IMR-90 (cell line): ENCODE measurements at regions of chr9 and their contacts with region 1.

Region 1: GRCh38 chr9:21812946-21813568 is 10.6 kb downstream of the MTAP start:
- DNase-seq: peak; percentile 74
- ATAC-seq: peak; percentile 87
- H3K4me3 ChIP-seq: no peak overlapping the region
- H3K27ac ChIP-seq: no peak overlapping the region
- H3K4me1 ChIP-seq: 0 out of 2 replicates have a peak, but pooled peaks cover 4% of the 10 kb centered on the region
- H3K27me3 ChIP-seq: no peaks in the 10 kb centered on the region
- CTCF ChIP-seq: peak; percentile 92
- POLR2A ChIP-seq: 0 out of 2 replicates have a peak, but pooled peaks have one; percentile 20
- RAD21 ChIP-seq: peak; percentile 96

Region 2: DNA sequence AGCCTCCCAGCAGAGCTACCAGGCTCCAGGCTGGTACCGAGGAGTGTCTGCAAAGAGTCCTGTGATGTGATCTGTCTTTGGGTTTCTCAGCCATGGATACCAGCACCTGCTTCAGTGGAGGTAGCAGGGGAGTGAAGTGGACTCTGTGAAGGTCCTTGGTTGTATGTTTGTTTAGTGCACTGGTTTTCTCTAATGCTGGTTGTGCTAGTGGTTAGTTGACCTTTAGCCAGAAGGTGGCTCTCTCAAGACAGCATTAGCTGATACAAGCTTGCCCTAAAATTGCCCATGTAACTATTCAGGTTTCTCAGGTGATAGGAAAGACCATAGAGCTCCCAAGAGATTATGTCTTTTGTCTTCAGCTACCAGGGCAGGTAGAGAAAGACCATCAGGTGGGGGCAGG is 76.6 kb after region 1 on chr9:
- CTCF ChIA-PET with region 1: no interaction called
- POLR2A ChIA-PET with region 1: no interaction called
- dilution Hi-C with region 1: no loop called
- in situ Hi-C with region 1: no loop called
- intact Hi-C with region 1: no loop called
- DNase-seq: no peak
- ATAC-seq: no peak
- H3K4me3 ChIP-seq: no peak overlapping the region
- H3K27ac ChIP-seq: no peak overlapping the region
- H3K4me1 ChIP-seq: no peaks in the 10 kb centered on the region
- H3K27me3 ChIP-seq: no peaks in the 10 kb centered on the region
- CTCF ChIP-seq: no peak
- POLR2A ChIP-seq: no peak
- RAD21 ChIP-seq: no peak

Region 3: GRCh38 chr9:21965401-21965951 is 152.4 kb after region 1 on chr9:
- CTCF ChIA-PET with region 1: interaction called, 4 read pairs
- POLR2A ChIA-PET with region 1: no interaction called
- dilution Hi-C with region 1: no loop called
- in situ Hi-C with region 1: loop called (anchors 10 kb)
- intact Hi-C with region 1: loop called (anchors 1 kb)
- DNase-seq: peak; percentile 77
- ATAC-seq: peak; percentile 93
- H3K4me3 ChIP-seq: peak overlapping the region; percentile 21
- H3K27ac ChIP-seq: no peak overlapping the region
- H3K4me1 ChIP-seq: peaks cover 4% of the 10 kb centered on the region
- H3K27me3 ChIP-seq: peaks cover 36% of the 10 kb centered on the region
- CTCF ChIP-seq: peak; percentile 59
- POLR2A ChIP-seq: no peak
- RAD21 ChIP-seq: peak; percentile 59

Region 4: DNA sequence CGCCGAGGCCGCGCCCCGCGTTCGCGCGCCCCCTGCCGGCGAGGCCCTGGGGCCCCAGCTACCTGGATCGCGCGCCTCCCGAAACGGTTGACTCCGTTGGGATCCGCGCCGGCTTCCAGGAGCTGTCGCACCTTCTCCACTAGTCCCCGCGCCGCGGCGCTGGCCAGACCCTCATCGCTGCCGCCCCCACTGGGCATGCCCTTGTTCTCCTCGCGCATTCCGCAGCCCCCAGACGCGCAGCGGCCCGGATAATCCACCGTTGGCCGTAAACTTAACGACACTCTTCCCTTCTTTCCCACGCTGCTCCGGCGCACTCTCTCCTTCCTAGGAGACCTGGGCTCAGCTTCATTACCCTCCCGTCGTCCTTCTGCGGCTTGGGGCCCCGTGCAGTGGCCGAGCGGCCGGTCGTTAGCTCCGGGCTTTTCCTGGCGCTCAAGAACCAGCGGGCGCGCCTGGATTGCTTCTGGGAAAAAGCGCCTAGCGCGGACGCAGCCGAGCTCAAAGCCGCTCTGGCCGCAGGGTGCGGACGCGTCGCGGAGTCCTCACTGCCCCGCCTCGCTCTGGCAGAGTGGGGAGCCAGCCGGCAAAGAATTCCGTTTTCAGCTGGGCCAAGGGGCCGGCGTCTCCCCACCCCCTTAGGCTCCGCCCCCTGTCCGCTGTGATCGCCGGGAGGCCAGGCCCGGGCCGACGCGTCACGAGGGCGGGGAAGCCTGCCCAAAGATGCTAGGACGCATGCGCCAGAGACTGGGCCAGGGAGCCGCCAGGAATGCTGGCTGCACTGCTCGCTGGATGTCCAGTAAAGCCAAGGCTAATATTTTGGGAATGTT is 195.9 kb after region 1 on chr9 and contains the start of gene CDKN2B:
- CTCF ChIA-PET with region 1: interaction called, 16 read pairs
- POLR2A ChIA-PET with region 1: no interaction called
- dilution Hi-C with region 1: no loop called
- in situ Hi-C with region 1: loop called (anchors 5 kb)
- intact Hi-C with region 1: loop called (anchors 1 kb)
- DNase-seq: peak; percentile 94
- ATAC-seq: peak; percentile 98
- H3K4me3 ChIP-seq: peak within 1 kb of the TSS; percentile 65
- H3K27ac ChIP-seq: peak within 1 kb of the TSS; percentile 70
- H3K4me1 ChIP-seq: peaks cover 8% of the 10 kb centered on the region; the same call in 1 of the 2 replicates
- H3K27me3 ChIP-seq: no peaks in the 10 kb centered on the region
- CTCF ChIP-seq: peak; percentile 85
- POLR2A ChIP-seq: peak; percentile 97
- RAD21 ChIP-seq: peak; percentile 67
- total RNA-seq, gene CDKN2B: 3.6 and 5.6 TPM in 2 replicates

Region 5: DNA sequence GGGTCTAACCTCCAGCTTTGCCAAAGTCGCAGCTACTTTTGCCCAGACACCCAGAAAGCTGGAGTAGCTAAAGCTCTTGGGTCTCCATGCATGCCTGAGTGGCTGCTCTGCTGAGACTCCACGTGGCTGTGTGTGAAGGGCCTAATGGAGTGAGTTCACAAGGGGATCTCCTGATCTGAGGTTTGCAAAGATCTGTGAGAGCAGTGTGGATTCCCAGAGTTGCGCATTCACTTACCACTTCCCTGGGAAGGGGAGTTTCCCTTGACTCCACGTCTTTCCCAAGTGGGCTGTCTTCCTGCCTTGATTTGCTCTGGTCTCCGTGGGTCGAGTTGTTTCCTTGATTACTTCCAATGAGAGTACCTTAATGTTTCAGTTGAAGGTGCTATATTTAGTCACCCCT is 213.6 kb after region 1 on chr9:
- CTCF ChIA-PET with region 1: no interaction called
- POLR2A ChIA-PET with region 1: no interaction called
- dilution Hi-C with region 1: no loop called
- in situ Hi-C with region 1: no loop called
- intact Hi-C with region 1: no loop called
- DNase-seq: no peak
- ATAC-seq: no peak
- H3K4me3 ChIP-seq: no peak overlapping the region
- H3K27ac ChIP-seq: no peak overlapping the region
- H3K4me1 ChIP-seq: peaks cover 3% of the 10 kb centered on the region; the same call in 1 of the 2 replicates
- H3K27me3 ChIP-seq: no peaks in the 10 kb centered on the region
- CTCF ChIP-seq: no peak
- POLR2A ChIP-seq: no peak
- RAD21 ChIP-seq: no peak

Region 6: DNA sequence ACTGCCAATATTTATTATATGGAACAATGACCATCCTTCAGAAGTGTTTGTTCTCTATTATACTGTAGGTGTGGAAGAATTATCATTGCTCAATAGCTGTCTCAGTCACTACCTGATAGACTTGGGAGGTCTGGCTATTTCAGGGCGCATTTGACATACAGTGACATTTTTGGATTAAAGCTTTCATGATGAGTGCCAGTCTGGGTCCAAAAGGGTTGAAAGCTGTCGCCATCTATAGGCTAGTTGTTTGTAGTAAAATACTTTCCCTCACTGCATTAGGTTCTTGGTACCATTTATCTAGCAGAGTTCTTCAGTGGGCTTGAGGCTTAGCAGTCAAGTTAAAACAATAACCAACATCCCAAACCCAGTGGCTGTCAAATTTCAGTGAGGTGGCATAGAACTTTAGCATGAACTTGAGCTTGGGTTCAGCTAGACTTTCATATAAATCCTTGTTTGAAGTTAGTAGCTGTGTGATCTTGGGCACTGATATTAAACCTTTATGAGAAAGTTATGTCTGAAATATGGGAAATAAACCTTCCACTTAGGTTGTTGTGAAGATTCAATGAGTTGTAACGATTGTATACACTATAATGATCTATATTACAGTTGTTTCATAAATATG is 306.6 kb after region 1 on chr9:
- CTCF ChIA-PET with region 1: interaction called, 3 read pairs
- POLR2A ChIA-PET with region 1: no interaction called
- dilution Hi-C with region 1: no loop called
- in situ Hi-C with region 1: loop called (anchors 25 kb)
- intact Hi-C with region 1: loop called (anchors 2 kb)
- DNase-seq: peak; percentile 50
- ATAC-seq: peak; percentile 30; the same call in 1 of the 2 replicates
- H3K4me3 ChIP-seq: no peak overlapping the region
- H3K27ac ChIP-seq: no peak overlapping the region
- H3K4me1 ChIP-seq: peaks cover 16% of the 10 kb centered on the region
- H3K27me3 ChIP-seq: no peaks in the 10 kb centered on the region
- CTCF ChIP-seq: peak; percentile 64
- POLR2A ChIP-seq: no peak
- RAD21 ChIP-seq: peak; percentile 75

Region 7: DNA sequence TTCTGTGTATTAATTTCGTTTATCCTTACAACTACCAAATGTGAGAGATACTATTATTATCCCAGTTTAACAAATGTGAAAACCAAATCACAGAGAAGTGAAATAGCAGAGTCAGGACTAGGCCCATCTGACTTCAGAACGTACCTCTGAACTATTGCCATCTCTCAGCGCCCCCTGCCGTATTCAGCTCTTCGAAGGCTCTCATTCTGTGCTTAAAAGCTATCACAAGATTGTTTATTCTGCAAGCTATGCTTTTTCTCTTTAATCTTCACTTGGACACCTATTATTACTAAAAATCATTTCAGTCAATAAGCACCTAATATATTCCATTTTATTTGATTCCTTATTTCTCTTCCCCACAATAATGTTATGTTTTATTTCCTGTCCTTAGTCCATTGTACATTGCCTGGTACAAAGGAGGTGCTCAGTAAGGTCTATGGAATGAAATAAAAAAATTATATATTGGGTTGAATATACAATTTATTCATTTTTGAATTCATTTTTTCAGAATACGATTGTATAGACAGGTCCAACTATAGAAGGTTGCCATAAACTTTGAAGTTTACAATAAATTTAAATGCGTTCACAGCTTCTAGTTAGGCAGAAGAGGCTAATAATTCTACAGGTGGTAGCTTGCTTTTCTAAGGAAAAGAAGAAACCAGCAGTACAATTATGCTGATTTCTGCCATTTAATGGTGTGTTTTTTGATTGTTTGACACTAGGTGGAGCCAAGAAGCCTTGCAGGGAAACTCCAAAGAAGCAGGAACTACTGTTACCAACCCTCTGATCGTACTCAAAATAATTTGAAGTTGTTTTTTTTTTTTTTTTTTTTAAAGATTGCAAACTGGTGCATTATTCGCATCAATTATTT is 431.3 kb after region 1 on chr9:
- CTCF ChIA-PET with region 1: interaction called, 9 read pairs
- POLR2A ChIA-PET with region 1: interaction called, 9 read pairs
- dilution Hi-C with region 1: no loop called
- in situ Hi-C with region 1: loop called (anchors 5 kb)
- intact Hi-C with region 1: loop called (anchors 1 kb)
- DNase-seq: peak; percentile 63
- ATAC-seq: peak; percentile 92
- H3K4me3 ChIP-seq: no peak overlapping the region
- H3K27ac ChIP-seq: no peak overlapping the region
- H3K4me1 ChIP-seq: no peaks in the 10 kb centered on the region
- H3K27me3 ChIP-seq: peaks cover 3% of the 10 kb centered on the region
- CTCF ChIP-seq: peak; percentile 67
- POLR2A ChIP-seq: no peak
- RAD21 ChIP-seq: peak; percentile 67

Region 8: DNA sequence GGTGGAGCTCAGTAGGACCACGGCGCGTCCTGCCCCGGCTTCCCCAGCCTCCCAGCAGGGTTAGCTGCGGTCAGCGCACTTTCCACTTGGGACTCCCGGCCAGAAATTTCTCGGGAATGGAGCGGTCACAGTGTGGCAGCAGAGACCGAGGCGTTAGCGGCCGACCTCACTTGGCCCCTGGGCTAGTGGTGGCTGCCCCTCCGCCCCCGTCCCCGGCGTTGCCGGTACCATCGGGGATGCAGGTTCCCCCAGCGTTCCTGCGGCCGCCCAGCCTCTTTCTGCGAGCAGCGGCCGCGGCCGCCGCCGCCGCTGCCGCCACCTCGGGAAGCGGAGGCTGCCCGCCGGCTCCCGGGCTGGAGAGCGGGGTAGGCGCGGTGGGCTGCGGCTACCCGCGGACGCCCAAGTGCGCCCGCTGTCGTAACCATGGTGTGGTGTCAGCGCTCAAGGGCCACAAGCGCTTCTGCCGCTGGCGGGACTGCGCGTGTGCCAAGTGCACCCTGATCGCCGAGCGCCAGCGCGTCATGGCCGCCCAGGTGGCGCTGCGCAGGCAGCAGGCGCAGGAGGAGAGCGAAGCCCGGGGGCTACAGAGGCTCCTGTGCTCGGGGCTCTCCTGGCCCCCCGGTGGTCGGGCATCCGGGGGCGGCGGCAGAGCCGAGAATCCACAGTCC is 634.0 kb after region 1 on chr9:
- CTCF ChIA-PET with region 1: interaction called, 4 read pairs
- POLR2A ChIA-PET with region 1: no interaction called
- dilution Hi-C with region 1: no loop called
- in situ Hi-C with region 1: loop called (anchors 5 kb)
- intact Hi-C with region 1: loop called (anchors 1 kb)
- DNase-seq: peak; percentile 20
- ATAC-seq: peak; percentile 75
- H3K4me3 ChIP-seq: peak overlapping the region; percentile 69
- H3K27ac ChIP-seq: no peak overlapping the region
- H3K4me1 ChIP-seq: no peaks in the 10 kb centered on the region
- H3K27me3 ChIP-seq: peaks cover 12% of the 10 kb centered on the region
- CTCF ChIP-seq: 0 out of 2 replicates have a peak, but pooled peaks have one; percentile 8
- POLR2A ChIP-seq: no peak
- RAD21 ChIP-seq: no peak